GM12878 (cell line): ENCODE measurements at regions of chr10 and their contacts with region 1.

Region 1: DNA sequence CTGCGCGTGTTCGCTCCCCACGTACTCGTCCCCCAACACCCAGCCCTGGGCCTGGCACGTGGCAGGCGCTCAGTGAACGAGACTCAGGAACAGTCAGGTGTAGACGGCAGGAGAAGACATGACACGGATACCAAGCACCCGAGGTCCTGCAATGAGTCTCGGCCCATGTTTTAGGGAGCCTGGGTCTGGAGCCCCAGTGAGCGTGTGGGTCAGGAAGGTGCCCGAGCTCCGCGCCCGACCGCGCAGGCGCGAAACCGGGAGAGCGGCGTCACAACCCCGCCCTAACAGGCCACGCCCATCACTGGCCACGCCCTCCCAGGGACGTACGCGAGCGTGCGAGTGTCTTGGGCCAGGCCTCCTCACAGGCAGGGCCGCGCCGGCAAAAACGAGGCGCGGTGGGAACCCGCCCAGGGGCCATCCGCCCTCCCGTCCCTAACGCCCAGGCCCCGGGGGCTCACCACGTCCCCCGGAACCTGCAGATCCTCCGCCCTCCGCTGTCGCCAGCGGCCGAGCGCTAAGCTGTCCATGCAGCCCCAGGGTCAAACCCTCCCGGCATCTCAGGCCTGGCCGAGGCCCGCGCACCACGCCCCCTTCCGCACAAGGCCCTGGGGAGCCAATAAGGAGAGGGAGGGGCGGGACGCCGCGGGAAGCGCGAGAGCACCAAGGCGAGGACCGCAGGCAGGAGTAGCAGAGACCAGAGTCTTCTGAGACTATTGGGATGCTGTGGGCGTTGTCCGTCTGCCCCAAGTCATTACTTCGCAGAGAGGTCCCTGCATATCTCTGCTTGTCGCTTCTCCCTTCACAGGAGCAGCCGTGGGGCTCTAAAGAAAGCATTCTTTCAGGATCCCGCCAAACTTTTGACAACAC is at the start of gene C10orf143:
- DNase-seq: peak; percentile 89
- ATAC-seq: peak; percentile 90
- H3K4me3 ChIP-seq: peak within 1 kb of the TSS; percentile 84
- H3K27ac ChIP-seq: peak within 1 kb of the TSS; percentile 87
- H3K4me1 ChIP-seq: peaks cover 17% of the 10 kb centered on the region
- H3K27me3 ChIP-seq: no peaks in the 10 kb centered on the region
- CTCF ChIP-seq: no peak
- EP300 ChIP-seq: 0 out of 4 replicates have a peak, but pooled peaks of 1 of the 2 experiments have one; percentile 20
- POLR2A ChIP-seq: peak; percentile 92
- RAD21 ChIP-seq: no peak
- polyA plus RNA-seq, gene C10orf143: 0.64 to 0.90 TPM

Region 2: GRCh38 chr10:129466703-129467358 is 643.6 kb before region 1 on chr10 and contains the start of gene MGMT:
- CTCF ChIA-PET with region 1: no interaction called
- POLR2A ChIA-PET with region 1: no interaction called
- RAD21 ChIA-PET with region 1: no interaction called
- SMC1A ChIA-PET with region 1: no interaction called
- in situ Hi-C with region 1: loop called (anchors 10 kb)
- intact Hi-C with region 1: no loop called
- DNase-seq: peak; percentile 25
- ATAC-seq: peak; percentile 96
- H3K4me3 ChIP-seq: peak within 1 kb of the TSS; percentile 89
- H3K27ac ChIP-seq: peak within 1 kb of the TSS; percentile 76
- H3K4me1 ChIP-seq: peaks cover 11% of the 10 kb centered on the region
- H3K27me3 ChIP-seq: no peaks in the 10 kb centered on the region
- CTCF ChIP-seq: no peak
- EP300 ChIP-seq: no peak
- POLR2A ChIP-seq: peak; percentile 97
- RAD21 ChIP-seq: no peak
- polyA plus RNA-seq, gene MGMT: 1.7 to 4.1 TPM

Region 3: GRCh38 chr10:129888784-129889616 is 221.5 kb before region 1 on chr10:
- CTCF ChIA-PET with region 1: interaction called, 3 read pairs
- POLR2A ChIA-PET with region 1: no interaction called
- RAD21 ChIA-PET with region 1: interaction called, 4 read pairs
- SMC1A ChIA-PET with region 1: no interaction called
- in situ Hi-C with region 1: no loop called
- intact Hi-C with region 1: loop called (anchors 5 kb)
- DNase-seq: no peak
- ATAC-seq: peak; percentile 80
- H3K4me3 ChIP-seq: no peak overlapping the region
- H3K27ac ChIP-seq: no peak overlapping the region
- H3K4me1 ChIP-seq: no peaks in the 10 kb centered on the region
- H3K27me3 ChIP-seq: no peaks in the 10 kb centered on the region
- CTCF ChIP-seq: peak; percentile 46 to 72 (median 58)
- EP300 ChIP-seq: no peak
- POLR2A ChIP-seq: no peak
- RAD21 ChIP-seq: peak; percentile 38

Region 4: DNA sequence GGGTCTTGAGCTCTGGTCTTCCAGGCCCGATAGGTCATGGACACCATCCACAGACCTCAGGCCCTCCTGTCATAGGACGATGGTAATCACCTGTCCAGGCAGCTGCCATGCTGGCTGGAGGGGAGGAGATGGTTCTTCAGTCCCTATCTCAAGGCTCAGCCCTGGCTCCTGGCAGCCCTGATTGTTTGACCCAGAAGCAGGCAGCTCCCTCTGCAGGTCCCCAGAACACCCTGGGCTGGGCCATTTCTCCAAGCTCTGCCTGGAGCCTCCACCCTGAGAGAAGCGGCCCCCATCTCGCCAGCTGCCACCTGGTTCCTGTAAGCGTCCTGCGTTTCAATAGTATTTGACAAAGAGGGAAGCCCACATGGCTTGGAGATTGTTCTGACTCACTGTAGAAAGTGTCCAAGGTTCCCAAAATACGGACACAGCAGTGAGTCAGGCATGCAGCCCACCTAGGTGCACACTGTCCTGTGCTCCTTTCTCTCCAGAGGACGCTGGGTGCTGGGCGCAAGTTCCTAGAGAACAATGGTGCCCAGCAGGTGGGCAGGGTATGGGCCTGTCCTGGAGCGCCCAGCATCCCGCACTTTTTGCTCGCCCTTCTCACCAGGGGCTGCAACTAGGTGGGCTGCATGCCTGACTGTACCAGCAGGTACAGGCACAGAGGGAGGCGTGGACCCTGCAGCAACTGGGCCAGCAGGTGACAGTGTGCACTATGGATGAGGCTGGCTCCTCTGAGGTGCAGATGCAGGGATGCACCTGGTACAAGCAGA is 74.0 kb before region 1 on chr10:
- CTCF ChIA-PET with region 1: no interaction called
- POLR2A ChIA-PET with region 1: no interaction called
- RAD21 ChIA-PET with region 1: no interaction called
- SMC1A ChIA-PET with region 1: no interaction called
- in situ Hi-C with region 1: no loop called
- intact Hi-C with region 1: no loop called
- DNase-seq: no peak
- ATAC-seq: no peak
- H3K4me3 ChIP-seq: no peak overlapping the region
- H3K27ac ChIP-seq: no peak overlapping the region
- H3K4me1 ChIP-seq: no peaks in the 10 kb centered on the region
- H3K27me3 ChIP-seq: no peaks in the 10 kb centered on the region
- CTCF ChIP-seq: no peak
- EP300 ChIP-seq: no peak
- POLR2A ChIP-seq: no peak
- RAD21 ChIP-seq: no peak

Region 5: DNA sequence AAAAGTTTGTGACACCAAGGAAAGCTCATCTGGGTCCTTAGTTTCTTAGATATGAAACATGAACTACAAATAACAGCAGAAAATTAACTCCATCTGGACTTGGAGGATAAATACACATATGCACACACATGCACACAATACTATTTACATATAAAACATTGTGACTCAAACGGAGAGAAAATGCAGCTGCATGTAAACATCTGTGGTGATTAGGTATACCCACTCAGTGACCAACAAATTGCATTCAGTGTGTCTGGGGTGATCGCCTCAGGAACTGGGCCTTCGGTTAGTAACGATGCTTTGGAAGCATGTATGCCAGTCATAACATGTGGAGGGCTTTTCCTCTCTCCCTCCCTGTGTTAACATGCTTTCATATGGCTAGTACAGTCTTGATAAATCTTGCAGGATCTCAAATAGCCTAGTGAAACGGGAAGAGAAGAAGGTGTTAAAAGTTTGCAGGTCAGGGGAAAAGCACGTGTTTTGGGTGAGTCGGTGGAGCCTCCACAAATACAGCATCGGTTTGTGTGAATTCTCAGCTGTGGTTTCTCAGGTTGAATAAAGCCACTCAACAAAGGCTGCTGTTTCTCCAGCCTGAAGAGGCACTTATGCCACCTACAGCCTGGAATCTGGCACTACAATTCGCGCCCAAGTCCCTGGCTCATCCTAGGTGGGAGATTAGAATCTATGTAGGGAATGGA is 17.0 kb after region 1 on chr10:
- CTCF ChIA-PET with region 1: interaction called, 38 read pairs
- POLR2A ChIA-PET with region 1: interaction called, 14 read pairs
- RAD21 ChIA-PET with region 1: interaction called, 7 read pairs
- SMC1A ChIA-PET with region 1: interaction called, 19 read pairs
- in situ Hi-C with region 1: no loop called
- intact Hi-C with region 1: no loop called
- DNase-seq: peak; percentile 44
- ATAC-seq: peak; percentile 98
- H3K4me3 ChIP-seq: no peak overlapping the region
- H3K27ac ChIP-seq: no peak overlapping the region
- H3K4me1 ChIP-seq: no peaks in the 10 kb centered on the region
- H3K27me3 ChIP-seq: no peaks in the 10 kb centered on the region
- CTCF ChIP-seq: peak; percentile 79 to 91 (median 85); a peak in 5 of 6 replicates
- EP300 ChIP-seq: no peak
- POLR2A ChIP-seq: no peak
- RAD21 ChIP-seq: peak; percentile 92

Region 6: GRCh38 chr10:130141878-130142277 is 31.4 kb after region 1 on chr10:
- CTCF ChIA-PET with region 1: interaction called, 45 read pairs
- POLR2A ChIA-PET with region 1: interaction called, 48 read pairs
- RAD21 ChIA-PET with region 1: interaction called, 55 read pairs
- SMC1A ChIA-PET with region 1: interaction called, 14 read pairs
- in situ Hi-C with region 1: no loop called
- intact Hi-C with region 1: no loop called
- DNase-seq: no peak
- ATAC-seq: peak; percentile 88
- H3K4me3 ChIP-seq: peak overlapping the region; percentile 62; the same call in 1 of the 2 replicates
- H3K27ac ChIP-seq: peak overlapping the region; percentile 55
- H3K4me1 ChIP-seq: peaks cover 42% of the 10 kb centered on the region
- H3K27me3 ChIP-seq: no peaks in the 10 kb centered on the region
- CTCF ChIP-seq: no peak
- EP300 ChIP-seq: no peak
- POLR2A ChIP-seq: no peak
- RAD21 ChIP-seq: no peak